ENCODE measurements at regions of chr6 and their contacts with region 1.

Region 1: DNA sequence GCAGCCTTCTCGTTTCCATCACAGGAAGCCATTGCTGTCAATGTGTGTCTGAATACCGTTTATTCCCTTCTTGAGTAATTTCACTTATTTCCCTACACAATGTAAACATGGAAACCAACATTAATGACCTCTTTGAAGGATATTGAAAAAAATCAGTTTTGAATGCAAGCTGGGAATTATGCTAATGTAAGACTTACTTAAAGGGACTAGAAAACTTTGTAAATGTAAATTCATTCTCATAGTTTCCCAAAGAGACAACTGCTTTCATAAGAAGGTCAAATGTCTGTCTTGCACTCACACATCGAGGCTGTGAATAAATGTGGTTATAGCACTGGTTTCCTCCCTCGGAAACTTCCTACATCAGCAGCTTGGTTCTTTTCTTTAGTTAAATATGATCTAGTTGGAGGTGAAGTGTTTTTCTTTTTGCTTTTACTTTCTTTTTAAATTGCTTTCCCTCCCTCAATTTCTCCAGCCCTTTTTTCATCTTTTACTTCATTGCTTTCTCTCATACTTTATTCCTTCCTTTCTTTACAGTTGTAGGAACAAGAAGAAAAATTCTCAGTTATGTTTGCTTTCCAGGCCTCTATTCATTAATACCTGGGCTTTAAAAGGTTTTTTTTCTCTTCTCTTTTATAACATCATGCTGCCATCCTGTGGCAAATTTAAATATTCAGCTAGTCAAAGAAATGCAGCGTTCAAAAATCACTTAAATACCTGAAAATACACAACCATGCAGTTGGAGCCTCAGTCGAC is 108.3 kb downstream of the TNFAIP3 start:
- DNase-seq: peak; percentile 51
- ATAC-seq: peak; percentile 60
- H3K4me3 Mint-ChIP-seq: peak overlapping the region; percentile 55
- H3K27ac Mint-ChIP-seq: peak overlapping the region; percentile 90
- H3K4me1 Mint-ChIP-seq: peaks cover 72% of the 10 kb centered on the region
- H3K27me3 Mint-ChIP-seq: no peaks in the 10 kb centered on the region

Region 2: DNA sequence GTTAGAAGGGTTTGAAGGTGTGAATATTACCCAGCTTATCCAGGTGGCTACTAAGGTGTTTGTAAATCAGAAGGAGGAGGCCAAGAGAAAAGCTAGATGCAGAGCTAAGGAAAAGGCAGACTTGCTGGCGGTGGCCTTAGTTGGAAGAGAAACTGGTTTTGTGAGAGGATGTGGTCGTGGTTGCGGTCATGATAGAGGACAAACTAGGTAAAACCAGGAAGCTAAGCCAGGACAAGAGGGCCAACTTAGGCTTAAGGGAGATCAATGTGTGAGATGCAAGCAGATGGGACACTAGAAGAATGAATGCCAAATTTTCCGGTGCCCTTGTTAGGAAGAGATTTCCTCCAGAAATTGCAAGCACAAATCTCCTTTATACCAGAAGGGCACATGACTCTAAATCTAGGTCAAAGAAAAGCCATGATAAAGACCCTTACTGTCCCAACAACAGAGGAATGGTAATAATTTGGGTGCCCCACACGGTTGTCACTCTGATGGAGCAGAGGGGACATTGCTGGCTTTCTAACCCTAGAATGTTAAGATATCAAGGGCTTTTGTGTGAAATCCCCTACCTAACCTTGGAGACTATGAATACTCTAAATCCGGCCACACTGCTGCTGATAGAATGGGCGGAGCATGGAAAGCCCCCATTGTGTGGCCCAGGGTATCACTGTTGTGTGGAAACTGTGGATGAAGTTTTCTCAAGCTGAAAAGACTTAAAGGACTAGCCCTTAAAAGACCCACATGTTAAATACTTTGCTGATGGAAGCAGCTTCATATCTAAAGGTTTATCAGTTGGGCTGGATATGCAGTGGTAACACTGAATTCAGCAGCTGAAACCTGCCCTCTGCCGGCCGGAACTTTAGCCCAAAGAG is 809.8 kb before region 1 on chr6:
- CTCF ChIA-PET with region 1: no interaction called
- POLR2A ChIA-PET with region 1: no interaction called
- intact Hi-C with region 1: loop called in 1 of 2 experiments (anchors 10 kb)
- DNase-seq: peak; percentile 58
- ATAC-seq: no peak
- H3K4me3 Mint-ChIP-seq: no peak overlapping the region
- H3K27ac Mint-ChIP-seq: peak overlapping the region; percentile 26
- H3K4me1 Mint-ChIP-seq: peaks cover 26% of the 10 kb centered on the region
- H3K27me3 Mint-ChIP-seq: peaks cover 25% of the 10 kb centered on the region

Region 3: GRCh38 chr6:137791281-137792159 is 183.8 kb before region 1 on chr6:
- CTCF ChIA-PET with region 1: no interaction called
- POLR2A ChIA-PET with region 1: no interaction called
- intact Hi-C with region 1: loop called (anchors 5 to 10 kb)
- DNase-seq: no peak
- ATAC-seq: peak; percentile 31
- H3K4me3 Mint-ChIP-seq: peak overlapping the region; percentile 47
- H3K27ac Mint-ChIP-seq: peak overlapping the region; percentile 77
- H3K4me1 Mint-ChIP-seq: peaks cover 55% of the 10 kb centered on the region
- H3K27me3 Mint-ChIP-seq: no peaks in the 10 kb centered on the region

Region 4: DNA sequence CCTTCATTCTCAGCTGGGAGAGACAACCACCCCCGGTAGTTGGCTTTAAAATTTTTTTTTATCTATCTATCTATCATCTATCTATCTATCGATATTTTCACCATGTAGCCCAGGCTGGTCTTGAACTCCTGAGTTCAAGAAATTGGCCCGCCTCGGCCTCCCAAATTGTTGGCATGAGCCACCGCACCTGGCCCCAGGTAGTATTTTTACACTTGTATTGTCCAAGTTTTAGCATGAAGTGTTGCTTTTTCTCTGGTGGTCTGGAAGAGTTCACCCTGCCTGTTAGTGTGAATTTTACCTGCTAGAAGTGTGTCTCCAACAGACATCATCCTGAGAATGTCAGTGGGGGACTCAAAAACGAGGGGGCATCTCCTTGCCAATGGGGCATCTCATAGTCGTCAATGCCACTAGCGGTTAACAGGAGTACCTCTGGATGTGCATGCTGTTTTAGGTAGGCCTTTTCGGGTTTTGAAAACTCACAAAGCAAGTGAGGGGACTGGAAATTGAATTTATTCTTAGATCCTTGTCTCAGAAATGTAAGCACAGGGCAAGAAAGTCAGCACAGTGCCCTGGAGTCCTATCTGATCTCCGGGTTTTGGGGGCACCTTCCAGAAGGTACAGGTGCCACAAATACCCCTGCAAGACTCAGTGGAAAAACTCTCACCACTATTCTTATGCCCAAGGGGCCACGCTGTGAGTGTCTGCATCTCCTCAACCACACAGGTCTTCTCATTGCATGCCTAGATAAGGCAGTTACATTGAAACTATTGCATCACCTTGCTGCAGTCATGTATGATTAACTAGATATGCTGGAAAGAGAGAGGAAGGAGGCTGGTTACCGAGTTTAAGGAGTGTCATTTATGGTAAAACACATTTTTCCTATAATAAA is 71.2 kb before region 1 on chr6:
- CTCF ChIA-PET with region 1: interaction called, 4 read pairs
- POLR2A ChIA-PET with region 1: no interaction called
- intact Hi-C with region 1: loop called (anchors 1 to 2 kb)
- DNase-seq: peak; percentile 75
- ATAC-seq: peak; percentile 85
- H3K4me3 Mint-ChIP-seq: peak overlapping the region; percentile 69
- H3K27ac Mint-ChIP-seq: peak overlapping the region; percentile 98
- H3K4me1 Mint-ChIP-seq: peaks cover 62% of the 10 kb centered on the region
- H3K27me3 Mint-ChIP-seq: no peaks in the 10 kb centered on the region

Region 5: GRCh38 chr6:137938770-137939379 is 36.5 kb before region 1 on chr6:
- CTCF ChIA-PET with region 1: interaction called, 14 read pairs
- POLR2A ChIA-PET with region 1: no interaction called
- intact Hi-C with region 1: loop called in 1 of 2 experiments (anchors 2 kb)
- DNase-seq: no peak
- ATAC-seq: no peak
- H3K4me3 Mint-ChIP-seq: no peak overlapping the region
- H3K27ac Mint-ChIP-seq: peak overlapping the region; percentile 56
- H3K4me1 Mint-ChIP-seq: peaks cover 43% of the 10 kb centered on the region
- H3K27me3 Mint-ChIP-seq: no peaks in the 10 kb centered on the region

Region 6: DNA sequence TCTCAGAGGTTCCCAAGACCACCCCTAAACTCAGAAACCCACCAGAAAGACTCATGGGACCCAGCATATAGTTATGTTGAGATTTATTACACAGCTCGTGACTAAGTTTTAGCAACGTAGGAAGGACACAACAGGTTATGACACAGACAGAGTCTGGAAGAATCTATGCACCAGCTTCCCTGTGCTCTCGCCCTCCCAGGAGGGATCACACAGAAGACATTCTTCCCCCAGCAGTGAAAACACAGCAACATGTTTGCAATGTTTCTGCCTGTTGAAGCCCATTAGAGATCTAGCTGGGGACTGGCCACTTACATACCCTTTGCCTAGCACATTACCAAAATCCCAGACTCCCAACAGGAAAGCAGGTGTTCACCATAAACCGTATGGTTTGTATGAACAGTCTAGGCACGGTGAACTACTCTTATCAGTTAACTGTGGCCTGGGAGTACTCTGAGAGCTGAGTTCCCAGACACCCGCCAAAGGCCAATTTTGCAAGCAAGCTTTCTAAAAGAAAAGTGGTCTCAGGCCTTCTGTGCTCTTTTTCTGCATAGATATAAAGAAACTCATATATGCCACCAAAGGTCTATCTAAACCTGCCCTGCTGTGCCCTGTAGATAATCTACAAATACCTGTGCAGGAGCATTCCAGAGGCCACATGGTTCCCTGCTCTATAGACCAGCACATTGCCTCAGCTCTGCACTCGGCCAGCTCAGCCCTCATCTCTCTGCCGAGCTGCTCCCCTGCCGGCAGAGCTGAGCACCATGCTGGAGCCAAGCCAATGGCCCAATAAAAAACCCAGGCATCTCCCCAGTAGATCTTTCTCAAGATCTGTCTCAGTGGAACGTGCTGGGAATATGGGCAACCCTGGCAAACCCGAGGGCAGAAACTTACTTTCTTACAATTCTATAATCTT is 332.7 kb after region 1 on chr6:
- CTCF ChIA-PET with region 1: no interaction called
- POLR2A ChIA-PET with region 1: no interaction called
- intact Hi-C with region 1: no loop called
- DNase-seq: no peak
- ATAC-seq: no peak
- H3K4me3 Mint-ChIP-seq: no peak overlapping the region
- H3K27ac Mint-ChIP-seq: no peak overlapping the region
- H3K4me1 Mint-ChIP-seq: no peaks in the 10 kb centered on the region
- H3K27me3 Mint-ChIP-seq: no peaks in the 10 kb centered on the region